HCT116 (cell line): ENCODE measurements at regions of chr5 and their contacts with region 1.

Region 1: DNA sequence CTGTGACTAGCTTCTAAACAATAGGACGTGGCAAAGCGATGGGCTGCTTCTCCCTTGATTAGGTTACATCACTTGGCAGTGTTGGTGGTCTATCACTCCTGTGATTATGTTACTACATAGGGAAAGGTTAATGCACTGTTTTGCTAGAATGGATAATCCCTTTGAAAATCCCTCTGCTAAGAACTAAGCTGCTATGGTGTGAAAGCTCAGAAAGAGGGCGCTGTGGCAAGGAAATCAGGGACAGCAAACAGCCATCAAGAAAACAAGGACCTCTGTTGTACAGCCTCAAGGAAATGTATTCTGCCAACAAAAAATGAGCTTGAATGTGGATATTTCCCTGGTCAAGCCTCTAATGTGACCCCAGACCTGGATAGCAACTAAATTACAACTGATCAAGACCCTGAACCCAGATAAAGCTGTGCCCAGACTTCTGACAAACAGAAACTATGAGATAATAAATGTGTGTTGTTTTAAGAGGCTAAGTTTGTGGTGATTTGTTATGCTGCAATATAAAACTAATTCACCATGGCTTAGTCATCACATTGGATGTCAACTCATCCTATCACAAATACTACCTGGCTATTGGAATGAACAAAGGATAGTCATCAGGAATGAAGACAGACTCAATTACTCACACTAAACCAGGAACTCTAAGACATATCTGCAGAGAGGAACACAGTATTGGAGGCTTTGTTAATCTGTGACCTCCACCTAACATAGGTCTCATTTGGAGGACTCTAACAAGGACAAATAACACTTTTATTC is 1215.9 kb downstream of the EFNA5 start:
- DNase-seq: peak; percentile 59
- ATAC-seq: peak; percentile 89
- H3K4me3 ChIP-seq: no peak overlapping the region
- H3K27ac ChIP-seq: no peak overlapping the region
- H3K4me1 ChIP-seq: peaks cover 0 to 9% of the 10 kb centered on the region in 2 experiments; a peak in 2 of 4 replicates
- H3K27me3 ChIP-seq: no peaks in the 10 kb centered on the region
- CTCF ChIP-seq: peak; percentile 23 to 77 (median 73); a peak in 4 of 6 replicates
- POLR2A ChIP-seq: no peak
- RAD21 ChIP-seq: peak; percentile 55

Region 2: GRCh38 chr5:106097340-106097739 is 357.5 kb before region 1 on chr5:
- CTCF ChIA-PET with region 1: no interaction called
- POLR2A ChIA-PET with region 1: no interaction called
- RAD21 ChIA-PET with region 1: no interaction called
- intact Hi-C with region 1: no loop called
- DNase-seq: no peak
- ATAC-seq: no peak
- H3K4me3 ChIP-seq: no peak overlapping the region
- H3K27ac ChIP-seq: no peak overlapping the region
- H3K4me1 ChIP-seq: no peaks in the 10 kb centered on the region
- H3K27me3 ChIP-seq: no peaks in the 10 kb centered on the region
- CTCF ChIP-seq: no peak
- POLR2A ChIP-seq: no peak
- RAD21 ChIP-seq: no peak

Region 3: GRCh38 chr5:106277540-106278096 is 177.2 kb before region 1 on chr5:
- CTCF ChIA-PET with region 1: no interaction called
- POLR2A ChIA-PET with region 1: no interaction called
- RAD21 ChIA-PET with region 1: no interaction called
- intact Hi-C with region 1: no loop called
- DNase-seq: no peak
- ATAC-seq: no peak
- H3K4me3 ChIP-seq: no peak overlapping the region
- H3K27ac ChIP-seq: no peak overlapping the region
- H3K4me1 ChIP-seq: no peaks in the 10 kb centered on the region
- H3K27me3 ChIP-seq: no peaks in the 10 kb centered on the region
- CTCF ChIP-seq: no peak
- POLR2A ChIP-seq: no peak
- RAD21 ChIP-seq: no peak

Region 4: DNA sequence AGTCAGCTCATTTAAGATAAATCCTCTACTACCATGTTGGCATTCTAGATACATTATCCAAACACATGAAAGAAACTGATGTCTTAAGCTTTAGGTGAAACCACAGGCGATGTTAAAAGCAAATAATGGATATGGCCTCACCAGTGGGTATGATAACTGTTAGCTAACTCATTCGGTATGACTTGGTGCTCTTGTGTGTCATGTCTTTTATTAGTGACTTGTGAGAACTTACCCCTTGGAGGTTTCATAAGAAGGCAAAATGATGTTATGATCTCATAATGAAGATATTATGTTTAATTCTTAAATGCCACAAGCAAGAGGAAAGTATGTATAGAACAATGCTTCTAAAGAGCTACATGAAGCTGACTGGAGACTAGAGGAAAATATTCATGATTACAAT is 11.1 kb before region 1 on chr5:
- CTCF ChIA-PET with region 1: interaction called, 23 read pairs
- POLR2A ChIA-PET with region 1: no interaction called
- RAD21 ChIA-PET with region 1: no interaction called
- intact Hi-C with region 1: no loop called
- DNase-seq: no peak
- ATAC-seq: no peak
- H3K4me3 ChIP-seq: no peak overlapping the region
- H3K27ac ChIP-seq: no peak overlapping the region
- H3K4me1 ChIP-seq: no peaks in the 10 kb centered on the region
- H3K27me3 ChIP-seq: no peaks in the 10 kb centered on the region
- CTCF ChIP-seq: no peak
- POLR2A ChIP-seq: no peak
- RAD21 ChIP-seq: no peak

Region 5: DNA sequence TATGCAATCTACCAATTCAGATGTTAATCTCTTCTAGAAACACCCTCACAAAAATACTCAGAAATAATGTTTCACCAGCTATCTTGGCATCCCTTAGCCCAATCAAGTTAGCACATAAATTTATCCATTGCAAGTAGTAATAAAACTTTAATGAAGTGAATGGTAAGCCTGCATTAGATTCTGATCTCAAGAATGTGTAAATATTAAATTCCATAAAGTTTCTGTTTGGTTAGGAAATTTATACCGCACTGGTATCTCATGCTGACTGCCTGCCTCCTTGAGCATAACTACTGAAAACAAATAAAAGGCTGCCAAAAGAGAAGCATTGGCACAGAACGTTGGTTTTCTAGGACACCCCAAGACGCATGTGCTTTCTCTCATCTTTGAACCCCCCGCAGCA is 10.6 kb after region 1 on chr5:
- CTCF ChIA-PET with region 1: interaction called, 11 read pairs
- POLR2A ChIA-PET with region 1: no interaction called
- RAD21 ChIA-PET with region 1: no interaction called
- intact Hi-C with region 1: no loop called
- DNase-seq: no peak
- ATAC-seq: no peak
- H3K4me3 ChIP-seq: no peak overlapping the region
- H3K27ac ChIP-seq: no peak overlapping the region
- H3K4me1 ChIP-seq: no peaks in the 10 kb centered on the region
- H3K27me3 ChIP-seq: no peaks in the 10 kb centered on the region
- CTCF ChIP-seq: no peak
- POLR2A ChIP-seq: no peak
- RAD21 ChIP-seq: no peak

Region 6: DNA sequence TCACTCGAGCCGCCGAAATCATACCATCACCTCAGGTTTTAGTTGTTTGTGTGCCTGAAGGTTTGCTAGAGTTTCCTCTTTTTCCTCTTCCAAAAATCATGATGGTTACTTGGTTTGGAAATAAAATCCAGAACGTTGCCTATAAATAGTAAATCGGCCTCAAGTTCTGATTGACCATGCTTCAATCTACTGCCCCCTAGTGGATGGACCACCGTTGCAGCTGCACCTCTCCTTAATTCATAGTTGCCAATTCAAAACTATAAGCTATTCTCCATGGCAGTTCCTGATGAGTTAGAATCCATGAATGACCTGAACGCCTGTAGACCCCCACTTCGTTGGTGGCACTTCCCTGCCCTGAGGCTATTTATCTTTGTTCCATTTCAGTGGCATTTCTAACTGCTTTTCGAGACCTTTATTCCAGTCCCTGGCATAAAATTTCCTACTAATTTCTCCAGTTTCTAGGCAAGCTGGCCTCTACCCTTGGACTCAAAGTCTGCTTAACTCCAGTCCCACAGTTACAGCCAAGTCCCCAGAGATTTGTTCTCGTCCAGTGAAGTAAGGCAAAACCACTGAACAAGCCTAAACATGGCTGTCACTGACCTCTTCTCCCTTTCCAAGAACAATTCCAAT is 793.3 kb after region 1 on chr5:
- CTCF ChIA-PET with region 1: interaction called, 10 read pairs
- POLR2A ChIA-PET with region 1: no interaction called
- RAD21 ChIA-PET with region 1: no interaction called
- intact Hi-C with region 1: no loop called
- DNase-seq: peak; percentile 53
- ATAC-seq: peak; percentile 73
- H3K4me3 ChIP-seq: no peak overlapping the region
- H3K27ac ChIP-seq: no peak overlapping the region
- H3K4me1 ChIP-seq: no peaks in the 10 kb centered on the region
- H3K27me3 ChIP-seq: no peaks in the 10 kb centered on the region
- CTCF ChIP-seq: peak; percentile 41 to 97 (median 81); a peak in 5 of 6 replicates
- POLR2A ChIP-seq: no peak
- RAD21 ChIP-seq: peak; percentile 71

Region 7: GRCh38 chr5:107449369-107449768 is 994.5 kb after region 1 on chr5:
- CTCF ChIA-PET with region 1: no interaction called
- POLR2A ChIA-PET with region 1: no interaction called
- RAD21 ChIA-PET with region 1: no interaction called
- intact Hi-C with region 1: no loop called
- DNase-seq: no peak
- ATAC-seq: no peak
- H3K4me3 ChIP-seq: no peak overlapping the region
- H3K27ac ChIP-seq: no peak overlapping the region
- H3K4me1 ChIP-seq: no peaks in the 10 kb centered on the region
- H3K27me3 ChIP-seq: no peaks in the 10 kb centered on the region
- CTCF ChIP-seq: no peak
- POLR2A ChIP-seq: no peak
- RAD21 ChIP-seq: no peak